Heart right ventricle (tissue), 16 donors: ENCODE measurements at regions of chr6 and their contacts with region 1.

Region 1: DNA sequence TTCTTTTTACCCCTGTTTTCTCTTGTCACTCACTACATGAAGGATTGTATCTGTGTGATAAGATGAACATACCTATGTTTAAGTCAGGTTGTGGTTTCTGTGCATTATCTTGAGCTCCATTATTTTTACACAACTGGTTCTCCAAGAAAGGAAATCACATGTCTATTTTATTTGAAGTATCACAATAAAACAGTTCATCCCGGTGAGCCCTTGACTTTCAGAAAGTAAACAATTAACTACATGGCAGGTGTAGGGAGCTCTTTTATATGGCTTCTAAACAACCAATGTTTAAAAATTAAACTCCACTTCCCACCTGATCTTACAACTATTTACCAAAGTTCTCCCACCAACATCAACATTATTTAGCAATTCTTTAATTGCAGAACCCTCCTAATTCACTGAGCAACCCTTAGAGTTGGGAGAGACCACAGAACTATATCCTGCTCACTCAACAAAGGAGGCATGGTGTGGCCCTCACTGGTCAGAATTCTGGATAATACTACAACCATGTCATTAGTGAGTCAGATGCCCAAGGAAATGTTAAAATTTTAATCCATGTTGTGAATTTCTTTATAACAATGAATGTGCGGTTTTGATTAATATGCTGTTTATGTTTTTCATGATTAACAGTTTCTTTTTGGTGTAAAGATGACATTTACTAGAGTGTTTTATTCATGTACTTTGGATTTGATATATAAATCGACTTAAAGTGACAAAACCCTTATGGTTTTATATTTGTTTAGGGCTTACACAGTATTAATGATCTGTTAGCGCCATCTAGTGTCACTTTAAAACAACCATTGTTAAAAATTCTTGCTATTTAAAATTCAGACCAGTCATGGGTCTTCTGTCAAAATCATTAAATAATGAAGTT is 50.0 kb upstream of the SCGN start:
- DNase-seq: no peak
- ATAC-seq: no peak
- H3K4me3 ChIP-seq: no peak overlapping the region
- H3K27ac ChIP-seq: no peak overlapping the region
- H3K4me1 ChIP-seq: no peaks in the 10 kb centered on the region
- H3K27me3 ChIP-seq: peaks cover 0 to 5% (median 0%) of the 10 kb centered on the region in 7 donors
- CTCF ChIP-seq: peak; percentile 26 to 76 (median 59)

Region 2: DNA sequence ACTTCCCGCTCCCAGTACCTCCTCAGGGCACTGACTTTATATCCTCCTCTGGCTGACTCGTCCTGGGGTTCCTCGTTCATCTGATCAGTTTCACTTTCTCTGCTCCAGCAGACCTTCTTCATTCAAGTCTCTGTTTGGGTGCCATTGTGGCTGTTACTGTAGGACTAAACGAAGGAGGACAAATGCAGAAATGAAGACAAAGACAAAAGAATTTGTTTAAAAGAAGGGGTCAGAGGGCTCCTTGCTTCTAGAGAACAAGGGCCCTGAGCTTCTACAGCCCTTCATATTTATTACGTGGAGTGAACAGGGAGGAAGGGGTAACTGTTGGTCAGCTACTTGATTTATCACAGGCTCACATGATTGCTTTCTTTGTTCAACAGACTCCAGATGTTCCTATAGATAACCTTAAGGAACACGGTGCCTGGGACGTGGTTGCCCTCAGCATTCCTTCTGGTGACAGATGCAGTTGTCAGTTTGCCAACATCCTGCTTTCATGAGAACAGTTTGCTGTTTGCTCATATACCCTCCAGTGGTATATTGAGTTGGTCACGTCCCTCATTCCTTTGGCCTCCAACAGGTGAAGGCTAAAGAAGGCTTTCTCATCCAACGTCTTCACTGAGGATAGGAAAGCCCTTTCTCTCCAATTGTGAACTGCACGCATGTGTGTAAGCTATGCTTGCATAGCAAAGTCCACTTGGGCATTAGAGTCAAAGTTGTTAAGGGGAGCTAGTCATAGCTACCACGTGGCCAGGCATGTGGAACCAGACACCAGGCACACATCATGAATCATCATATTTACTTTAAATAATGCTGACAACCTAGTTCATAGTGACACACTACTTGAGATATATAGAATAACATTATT is 693.9 kb after region 1 on chr6:
- intact Hi-C with region 1: loop called in 1 of 10 experiments (anchors 5 kb)
- DNase-seq: no peak
- ATAC-seq: no peak
- H3K4me3 ChIP-seq: no peak overlapping the region
- H3K27ac ChIP-seq: peak overlapping the region in 1 of 10 donors; percentile 59
- H3K4me1 ChIP-seq: peaks cover 0 to 6% (median 0%) of the 10 kb centered on the region in 9 donors
- H3K27me3 ChIP-seq: peaks cover 0 to 34% (median 0%) of the 10 kb centered on the region in 7 donors
- CTCF ChIP-seq: no peak